Thyroid gland (tissue), 4 donors: ENCODE measurements at regions of chr11 and their contacts with region 1.

Region 1: DNA sequence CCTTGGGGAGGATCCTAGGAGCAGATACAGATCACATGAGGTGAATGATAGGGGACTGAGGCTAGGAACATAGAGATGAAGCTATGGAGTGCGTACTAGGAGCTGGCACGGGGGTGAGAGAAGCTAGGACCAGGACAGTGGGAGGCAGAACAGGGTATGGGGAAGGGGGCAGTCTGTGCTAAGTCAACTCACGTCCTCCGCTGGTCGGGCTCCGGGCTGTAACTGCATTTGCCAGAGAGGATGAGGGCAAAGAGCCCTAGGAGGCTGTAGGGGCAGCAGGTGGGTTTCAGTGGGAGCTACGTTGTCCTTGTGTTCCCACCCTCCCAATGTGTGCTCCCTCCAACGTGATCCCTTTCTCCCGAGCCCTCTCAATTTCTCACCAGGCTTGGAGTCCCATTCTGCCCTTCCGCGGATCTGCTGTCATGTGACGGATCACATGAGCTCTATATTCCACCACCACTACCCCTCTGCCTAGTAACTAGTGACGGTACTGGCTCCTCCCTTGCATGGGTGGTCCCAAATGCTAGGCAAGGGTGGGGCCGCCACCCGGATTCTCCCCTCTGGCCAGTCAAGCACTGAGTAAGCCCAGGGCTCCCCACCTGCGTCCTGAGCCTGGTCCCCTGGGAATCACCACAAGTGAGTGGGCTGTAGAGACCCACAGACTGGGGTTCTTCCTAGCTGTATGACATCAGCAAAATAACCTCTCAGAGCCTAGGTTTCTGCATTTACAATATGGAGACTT is at the start of gene TPP1:
- DNase-seq: peak; percentile 92 to 94
- H3K4me3 ChIP-seq: peak within 1 kb of the TSS; percentile 38 to 68 (median 62)
- H3K27ac ChIP-seq: peak within 1 kb of the TSS; percentile 56 to 87 (median 72)
- H3K4me1 ChIP-seq: peaks cover 14 to 15% of the 10 kb centered on the region in 2 donors
- H3K27me3 ChIP-seq: no peaks in the 10 kb centered on the region
- CTCF ChIP-seq: no peak
- POLR2A ChIP-seq: peak in 1 of 2 donors; percentile 88
- total RNA-seq, gene TPP1: 51.3 to 97.3 (median 69.1) TPM

Region 2: DNA sequence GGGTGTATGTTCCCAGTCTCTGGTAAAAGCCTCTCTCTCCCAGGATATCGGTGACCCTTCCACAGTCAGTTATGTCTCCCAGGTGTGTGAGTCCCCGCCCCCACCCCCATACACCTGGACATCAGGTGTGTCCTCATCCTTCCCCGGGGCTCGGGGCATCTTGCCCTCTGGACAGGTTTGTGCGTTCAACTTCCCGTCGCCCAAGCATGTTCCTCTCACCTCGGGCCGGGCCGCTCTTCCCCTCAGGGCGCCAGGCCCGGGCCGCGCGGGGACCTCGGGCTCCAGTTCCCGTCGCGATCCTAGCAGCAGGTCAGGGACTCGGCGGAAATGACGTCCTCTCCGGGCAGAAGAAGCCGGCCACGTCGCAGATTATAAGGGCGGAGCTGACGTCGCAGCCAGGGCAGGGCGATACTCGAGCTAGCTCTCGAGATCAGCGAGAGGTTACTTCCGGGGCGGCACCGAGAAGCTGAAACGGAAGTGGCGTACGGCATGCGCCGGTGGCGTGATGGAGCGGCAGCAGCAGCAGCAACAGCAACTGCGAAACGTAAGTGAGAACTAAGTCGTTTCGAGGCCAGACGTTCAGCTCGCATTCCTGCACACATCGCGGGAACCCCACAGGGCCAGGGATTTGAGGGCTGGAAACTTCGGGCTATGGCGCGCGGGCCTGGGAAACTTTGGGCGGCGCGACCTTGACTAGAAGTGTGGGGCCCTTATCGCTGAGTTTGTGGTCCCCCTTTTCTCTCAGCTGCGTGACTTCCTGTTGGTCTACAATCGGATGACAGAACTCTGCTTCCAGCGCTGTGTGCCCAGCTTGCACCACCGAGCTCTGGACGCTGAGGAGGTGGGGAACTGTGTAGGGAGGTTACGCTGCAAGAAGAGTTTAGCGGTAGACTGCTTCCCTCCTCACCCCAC is 137.9 kb before region 1 on chr11 and contains the starts of genes ARFIP2 and TIMM10B:
- intact Hi-C with region 1: loop called (anchors 5 kb)
- DNase-seq: peak; percentile 98 to 99
- H3K4me3 ChIP-seq: peak within 1 kb of the TSS; percentile 44 to 74 (median 60)
- H3K27ac ChIP-seq: peak within 1 kb of the TSS; percentile 67 to 92 (median 67)
- H3K4me1 ChIP-seq: peaks cover 15 to 19% of the 10 kb centered on the region in 2 donors
- H3K27me3 ChIP-seq: no peaks in the 10 kb centered on the region
- CTCF ChIP-seq: no peak
- POLR2A ChIP-seq: peak; percentile 64 to 92
- total RNA-seq, gene ARFIP2: 86.7 to 124 (median 96.2) TPM
- total RNA-seq, gene TIMM10B: 42.1 to 72.0 (median 56.3) TPM

Region 3: DNA sequence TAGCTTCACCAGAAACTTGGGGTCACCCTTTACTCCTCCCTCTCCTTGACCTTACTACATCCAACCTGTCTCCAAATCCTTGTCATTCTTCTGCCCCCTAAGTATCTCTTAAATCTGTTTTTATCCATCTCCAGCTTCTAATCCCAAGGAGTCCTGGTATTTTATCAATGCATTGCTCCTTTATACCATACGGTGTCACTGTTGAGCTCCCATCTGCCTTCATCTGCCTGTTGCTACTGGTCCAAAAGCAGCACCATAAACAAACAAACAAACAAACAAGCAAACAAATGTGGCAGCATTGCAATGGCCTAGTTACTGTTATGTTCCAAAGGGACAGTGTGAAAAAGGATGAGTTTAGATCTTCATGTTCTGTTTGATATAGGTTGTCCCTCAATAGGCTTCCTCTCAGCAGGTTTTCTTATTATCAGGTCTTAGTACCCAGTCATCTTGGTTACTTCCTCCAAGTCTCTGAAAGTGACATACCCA is 87.9 kb before region 1 on chr11:
- intact Hi-C with region 1: loop called (anchors 5 kb)
- DNase-seq: peak in 1 of 2 donors; percentile 15
- H3K4me3 ChIP-seq: no peak overlapping the region
- H3K27ac ChIP-seq: no peak overlapping the region
- H3K4me1 ChIP-seq: no peaks in the 10 kb centered on the region
- H3K27me3 ChIP-seq: no peaks in the 10 kb centered on the region
- CTCF ChIP-seq: peak; percentile 32 to 95 (median 80)
- POLR2A ChIP-seq: no peak

Region 4: GRCh38 chr11:6682936-6683861 is 64.0 kb after region 1 on chr11 and contains the start of gene MRPL17:
- intact Hi-C with region 1: loop called (anchors 5 kb)
- DNase-seq: peak; percentile 99
- H3K4me3 ChIP-seq: peak within 1 kb of the TSS; percentile 29 to 85 (median 84)
- H3K27ac ChIP-seq: peak within 1 kb of the TSS; percentile 80 to 90 (median 86)
- H3K4me1 ChIP-seq: peaks cover 5 to 11% of the 10 kb centered on the region in 2 donors
- H3K27me3 ChIP-seq: no peaks in the 10 kb centered on the region
- CTCF ChIP-seq: peak; percentile 77 to 97 (median 88)
- POLR2A ChIP-seq: peak; percentile 31 to 79
- total RNA-seq, gene MRPL17: 37.8 to 579 (median 144) TPM